ENCODE measurements at regions of chr6 and their contacts with region 1.

Region 1: DNA sequence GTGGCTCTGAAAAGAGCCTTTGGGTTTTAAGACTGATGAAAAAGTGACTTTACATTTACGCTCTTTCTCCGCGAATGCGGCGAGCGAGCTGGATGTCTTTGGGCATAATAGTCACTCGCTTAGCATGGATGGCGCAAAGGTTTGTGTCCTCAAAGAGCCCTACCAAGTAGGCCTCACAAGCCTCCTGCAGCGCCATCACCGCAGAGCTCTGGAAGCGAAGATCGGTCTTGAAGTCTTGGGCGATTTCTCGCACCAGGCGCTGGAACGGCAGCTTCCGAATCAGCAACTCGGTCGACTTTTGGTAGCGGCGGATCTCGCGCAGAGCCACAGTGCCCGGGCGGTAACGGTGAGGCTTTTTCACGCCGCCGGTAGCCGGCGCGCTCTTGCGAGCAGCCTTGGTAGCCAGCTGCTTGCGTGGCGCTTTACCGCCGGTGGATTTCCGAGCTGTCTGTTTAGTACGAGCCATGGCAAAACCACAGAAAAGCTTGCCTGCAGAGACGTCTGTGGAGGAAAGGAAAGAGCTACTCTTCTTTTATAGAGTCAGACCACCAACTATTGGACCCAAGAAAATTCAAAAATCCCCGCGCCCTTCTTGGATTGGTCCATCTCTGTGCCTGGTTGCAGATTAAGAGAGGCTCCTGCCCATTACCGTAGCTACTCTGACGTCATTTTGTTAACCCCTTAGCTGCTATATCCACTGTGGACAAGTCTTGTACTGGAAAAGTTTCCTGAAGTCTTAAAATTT is 55.5 kb upstream of the HFE start:
- DNase-seq: peak; percentile 73 to 94 (median 81)
- ATAC-seq: peak; percentile 65
- H3K4me3 ChIP-seq: peak overlapping the region; percentile 64
- H3K4me3 Mint-ChIP-seq: peak overlapping the region; percentile 97
- H3K27ac ChIP-seq: peak overlapping the region; percentile 42 to 72
- H3K27ac Mint-ChIP-seq: peak overlapping the region; percentile 99
- H3K4me1 ChIP-seq: peaks cover 35% of the 10 kb centered on the region
- H3K4me1 Mint-ChIP-seq: peaks cover 46% of the 10 kb centered on the region
- H3K27me3 ChIP-seq: no peaks in the 10 kb centered on the region
- H3K27me3 Mint-ChIP-seq: no peaks in the 10 kb centered on the region
- CTCF ChIP-seq: peak; percentile 22

Region 2: DNA sequence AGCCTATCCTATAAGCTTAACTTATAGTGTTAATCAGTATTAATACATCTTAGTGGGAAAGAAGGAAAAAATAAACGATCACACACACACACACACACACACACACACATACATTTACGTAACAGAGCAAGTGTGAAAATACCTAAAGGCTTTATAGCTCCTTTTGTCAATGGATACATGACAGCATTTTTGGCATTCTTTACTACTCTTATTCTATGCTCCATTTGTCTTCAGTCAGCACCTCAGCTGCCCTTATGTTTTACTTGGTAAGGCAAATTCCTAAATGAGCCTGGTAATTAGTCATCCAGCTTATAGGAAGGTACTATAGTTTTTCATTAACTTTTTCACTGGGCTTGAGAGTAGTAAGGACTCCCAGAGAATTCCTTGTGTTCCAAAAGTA is 132.6 kb before region 1 on chr6:
- CTCF ChIA-PET with region 1: no interaction called
- POLR2A ChIA-PET with region 1: no interaction called
- intact Hi-C with region 1: no loop called
- DNase-seq: no peak
- ATAC-seq: no peak
- H3K4me3 ChIP-seq: no peak overlapping the region
- H3K4me3 Mint-ChIP-seq: no peak overlapping the region
- H3K27ac ChIP-seq: no peak overlapping the region
- H3K27ac Mint-ChIP-seq: no peak overlapping the region
- H3K4me1 ChIP-seq: no peaks in the 10 kb centered on the region
- H3K4me1 Mint-ChIP-seq: no peaks in the 10 kb centered on the region
- H3K27me3 ChIP-seq: no peaks in the 10 kb centered on the region
- H3K27me3 Mint-ChIP-seq: peaks cover 13% of the 10 kb centered on the region
- CTCF ChIP-seq: no peak

Region 3: GRCh38 chr6:25992413-25993037 is 39.2 kb before region 1 on chr6:
- CTCF ChIA-PET with region 1: interaction called, 21 read pairs
- POLR2A ChIA-PET with region 1: interaction called, 47 read pairs
- intact Hi-C with region 1: no loop called
- DNase-seq: peak; percentile 84 to 96 (median 93)
- ATAC-seq: peak; percentile 95
- H3K4me3 ChIP-seq: peak overlapping the region; percentile 55
- H3K4me3 Mint-ChIP-seq: peak overlapping the region; percentile 97
- H3K27ac ChIP-seq: peak overlapping the region; percentile 31 to 69
- H3K27ac Mint-ChIP-seq: peak overlapping the region; percentile 97
- H3K4me1 ChIP-seq: peaks cover 15% of the 10 kb centered on the region
- H3K4me1 Mint-ChIP-seq: peaks cover 37% of the 10 kb centered on the region
- H3K27me3 ChIP-seq: no peaks in the 10 kb centered on the region
- H3K27me3 Mint-ChIP-seq: no peaks in the 10 kb centered on the region
- CTCF ChIP-seq: peak; percentile 100

Region 4: DNA sequence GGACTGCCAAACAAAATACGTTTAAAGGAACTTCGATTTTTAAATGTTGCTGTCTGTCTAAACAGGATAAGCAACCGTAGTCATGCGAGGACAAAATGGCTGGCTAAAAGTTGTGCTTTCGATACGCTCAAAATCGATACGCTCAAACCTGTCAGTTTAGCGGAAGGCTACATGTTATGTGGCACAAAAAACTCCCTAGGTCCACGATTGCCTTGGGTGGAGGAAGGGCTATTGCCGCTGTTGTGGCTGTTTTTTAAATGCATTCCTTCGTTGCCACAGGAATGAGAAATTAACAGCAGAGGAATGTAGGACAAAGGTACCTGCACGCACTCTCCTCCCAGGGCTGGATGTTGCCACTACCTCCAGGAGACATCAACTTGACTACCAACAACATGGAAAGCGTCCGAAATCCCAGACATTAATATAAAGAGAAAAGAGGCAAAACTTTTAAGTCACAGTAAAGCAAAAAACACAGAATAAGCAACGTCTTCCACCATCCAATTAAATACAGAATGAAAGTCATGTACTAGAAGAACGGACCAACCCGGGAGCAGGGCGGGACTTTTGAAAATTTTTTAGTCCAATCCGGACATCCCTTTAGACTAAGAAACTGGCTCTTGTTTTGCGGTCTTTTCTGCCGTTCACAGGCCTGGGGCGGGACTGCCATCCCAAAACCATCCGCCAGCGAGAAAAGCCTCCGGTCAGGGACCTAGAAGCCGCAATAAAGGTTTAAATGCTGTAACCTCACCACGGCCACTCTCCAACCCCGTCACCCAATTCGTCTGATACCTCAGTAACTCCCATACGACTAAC is 23.3 kb after region 1 on chr6:
- CTCF ChIA-PET with region 1: interaction called, 11 read pairs
- POLR2A ChIA-PET with region 1: interaction called, 189 read pairs
- intact Hi-C with region 1: loop called (anchors 1 to 5 kb)
- DNase-seq: peak; percentile 68 to 97 (median 80)
- ATAC-seq: peak; percentile 71
- H3K4me3 ChIP-seq: peak overlapping the region; percentile 89
- H3K4me3 Mint-ChIP-seq: peak overlapping the region; percentile 97
- H3K27ac ChIP-seq: peak overlapping the region; percentile 81
- H3K27ac Mint-ChIP-seq: peak overlapping the region; percentile 96
- H3K4me1 ChIP-seq: peaks cover 29% of the 10 kb centered on the region
- H3K4me1 Mint-ChIP-seq: peaks cover 28% of the 10 kb centered on the region
- H3K27me3 ChIP-seq: no peaks in the 10 kb centered on the region
- H3K27me3 Mint-ChIP-seq: no peaks in the 10 kb centered on the region
- CTCF ChIP-seq: no peak

Region 5: DNA sequence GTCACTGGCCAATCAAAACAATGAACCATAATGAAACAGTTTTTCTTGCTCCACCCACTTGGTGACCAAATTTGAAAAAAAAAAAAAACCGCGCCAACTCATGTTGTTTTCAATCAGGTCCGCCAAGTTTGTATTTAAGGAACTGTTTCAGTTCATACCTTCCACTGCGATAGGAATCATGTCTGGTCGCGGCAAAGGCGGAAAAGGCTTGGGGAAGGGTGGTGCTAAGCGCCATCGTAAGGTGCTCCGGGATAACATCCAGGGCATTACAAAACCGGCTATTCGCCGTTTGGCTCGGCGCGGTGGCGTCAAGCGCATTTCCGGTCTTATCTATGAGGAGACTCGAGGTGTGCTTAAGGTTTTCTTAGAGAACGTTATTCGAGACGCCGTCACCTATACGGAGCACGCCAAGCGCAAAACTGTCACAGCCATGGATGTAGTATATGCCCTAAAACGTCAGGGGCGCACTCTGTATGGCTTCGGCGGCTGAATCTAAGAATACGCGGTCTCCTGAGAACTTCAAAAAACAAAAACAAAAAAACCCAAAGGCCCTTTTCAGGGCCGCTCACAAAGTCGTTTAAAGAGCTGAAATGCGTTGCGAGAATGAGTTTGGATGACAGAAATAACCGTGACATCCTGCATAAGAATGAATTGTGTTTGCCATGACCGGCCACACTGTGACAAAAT is 72.1 kb after region 1 on chr6:
- CTCF ChIA-PET with region 1: interaction called, 7 read pairs
- POLR2A ChIA-PET with region 1: interaction called, 49 read pairs
- intact Hi-C with region 1: loop called (anchors 2 kb)
- DNase-seq: peak; percentile 84 to 96 (median 90)
- ATAC-seq: peak; percentile 88
- H3K4me3 ChIP-seq: peak overlapping the region; percentile 58
- H3K4me3 Mint-ChIP-seq: peak overlapping the region; percentile 94
- H3K27ac ChIP-seq: peak overlapping the region; percentile 83 to 85
- H3K27ac Mint-ChIP-seq: peak overlapping the region; percentile 99
- H3K4me1 ChIP-seq: peaks cover 16% of the 10 kb centered on the region
- H3K4me1 Mint-ChIP-seq: peaks cover 13% of the 10 kb centered on the region
- H3K27me3 ChIP-seq: no peaks in the 10 kb centered on the region
- H3K27me3 Mint-ChIP-seq: peaks cover 5% of the 10 kb centered on the region
- CTCF ChIP-seq: peak; percentile 58

Region 6: GRCh38 chr6:26183581-26184366 is 152.0 kb after region 1 on chr6:
- CTCF ChIA-PET with region 1: no interaction called
- POLR2A ChIA-PET with region 1: interaction called, 19 read pairs
- intact Hi-C with region 1: no loop called
- DNase-seq: peak in 13 of 14 experiments; percentile 20 to 94 (median 48)
- ATAC-seq: peak; percentile 89
- H3K4me3 ChIP-seq: peak overlapping the region; percentile 62
- H3K4me3 Mint-ChIP-seq: peak overlapping the region; percentile 99
- H3K27ac ChIP-seq: peak overlapping the region; percentile 43 to 72
- H3K27ac Mint-ChIP-seq: peak overlapping the region; percentile 86
- H3K4me1 ChIP-seq: peaks cover 34% of the 10 kb centered on the region
- H3K4me1 Mint-ChIP-seq: peaks cover 42% of the 10 kb centered on the region
- H3K27me3 ChIP-seq: no peaks in the 10 kb centered on the region
- H3K27me3 Mint-ChIP-seq: no peaks in the 10 kb centered on the region
- CTCF ChIP-seq: no peak

Region 7: GRCh38 chr6:27138837-27139755 is 1107.3 kb after region 1 on chr6:
- CTCF ChIA-PET with region 1: no interaction called
- POLR2A ChIA-PET with region 1: interaction called, 23 read pairs
- intact Hi-C with region 1: loop called (anchors 5 to 10 kb)
- DNase-seq: peak in 12 of 14 experiments; percentile 28 to 89 (median 52)
- ATAC-seq: peak; percentile 78
- H3K4me3 ChIP-seq: peak overlapping the region; percentile 80
- H3K4me3 Mint-ChIP-seq: peak overlapping the region; percentile 95
- H3K27ac ChIP-seq: peak overlapping the region; percentile 89 to 90
- H3K27ac Mint-ChIP-seq: peak overlapping the region; percentile 95
- H3K4me1 ChIP-seq: peaks cover 13% of the 10 kb centered on the region
- H3K4me1 Mint-ChIP-seq: peaks cover 43% of the 10 kb centered on the region
- H3K27me3 ChIP-seq: no peaks in the 10 kb centered on the region
- H3K27me3 Mint-ChIP-seq: no peaks in the 10 kb centered on the region
- CTCF ChIP-seq: no peak

Measured in CD4-positive, alpha-beta T cell (primary cell).